HAP-1 (cell line): ENCODE measurements at regions of chrX and their contacts with region 1.

Region 1: GRCh38 chrX:129931411-129932015 is 25.5 kb downstream of the UTP14A start:
- DNase-seq: peak; percentile 93 to 99
- H3K4me3 ChIP-seq: peak overlapping the region; percentile 51
- H3K4me1 ChIP-seq: peaks cover 9% of the 10 kb centered on the region; the same call in 1 of the 2 replicates
- H3K27me3 ChIP-seq: no peaks in the 10 kb centered on the region

Region 2: GRCh38 chrX:129982274-129983251 is 51.0 kb after region 1 on chrX and contains the start of gene BCORL1:
- in situ Hi-C with region 1: loop called (anchors 5 kb)
- DNase-seq: peak; percentile 98 to 99
- H3K4me3 ChIP-seq: no peak within 1 kb of the TSS
- H3K4me1 ChIP-seq: peaks cover 14% of the 10 kb centered on the region
- H3K27me3 ChIP-seq: no peaks in the 10 kb centered on the region

Region 3: DNA sequence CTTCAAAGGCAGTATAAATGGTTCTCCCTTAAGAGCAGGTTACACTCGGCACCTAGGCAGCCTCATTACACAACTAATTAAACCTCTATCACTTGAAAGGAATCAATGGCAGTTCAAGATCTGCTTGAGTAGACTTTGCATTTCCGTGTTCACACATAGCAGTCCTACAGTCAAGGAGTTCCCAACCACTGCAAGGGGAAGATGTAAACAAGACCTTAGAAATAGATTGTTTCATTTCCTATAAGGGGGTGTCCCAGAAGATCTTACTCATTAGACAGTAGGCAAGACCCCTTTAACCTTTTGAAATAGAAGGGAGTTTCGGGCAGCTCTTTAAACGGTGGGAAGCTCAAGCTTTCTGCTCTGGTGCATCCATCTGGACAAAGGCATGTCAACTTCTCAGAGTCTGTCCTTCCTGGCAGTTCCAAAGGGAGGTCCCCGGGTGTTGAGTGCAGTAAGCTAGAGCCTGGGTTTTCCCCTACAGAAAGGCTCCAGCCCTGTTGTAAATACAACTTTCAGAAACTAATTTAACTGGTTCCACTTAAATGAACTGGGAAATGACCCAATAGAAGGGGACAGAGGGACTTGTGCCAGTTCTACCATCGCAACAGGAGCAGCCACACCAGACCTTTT is 621.0 kb after region 1 on chrX:
- in situ Hi-C with region 1: no loop called
- DNase-seq: no peak
- H3K4me3 ChIP-seq: no peak overlapping the region
- H3K4me1 ChIP-seq: no peaks in the 10 kb centered on the region
- H3K27me3 ChIP-seq: peaks cover 7% of the 10 kb centered on the region

Region 4: DNA sequence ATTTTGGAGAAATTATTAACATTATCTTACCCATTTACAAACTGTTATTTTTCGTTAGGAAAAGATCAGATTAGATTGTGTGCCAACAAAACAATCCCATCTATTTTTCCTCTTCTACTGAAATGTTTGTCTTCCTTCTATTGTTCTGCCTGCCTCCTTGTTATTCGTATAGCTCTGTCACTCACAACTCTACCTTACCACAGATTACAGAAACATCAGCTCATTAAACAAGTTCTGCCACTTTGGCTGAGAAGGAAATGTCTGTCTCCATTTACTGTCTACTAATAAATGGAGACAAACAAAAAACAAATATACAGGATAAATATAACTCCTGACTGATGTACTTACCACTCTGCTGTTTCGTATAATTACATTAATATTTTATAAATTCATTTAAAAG is 760.1 kb after region 1 on chrX:
- in situ Hi-C with region 1: no loop called
- DNase-seq: no peak
- H3K4me3 ChIP-seq: no peak overlapping the region
- H3K4me1 ChIP-seq: no peaks in the 10 kb centered on the region
- H3K27me3 ChIP-seq: no peaks in the 10 kb centered on the region